ENCODE measurements at regions of chr1 and their contacts with region 1.

Region 1: GRCh38 chr1:200971955-200972711 is 51.4 kb downstream of the KIF21B start:
- DNase-seq: peak; percentile 7 to 40 (median 36)
- H3K4me3 ChIP-seq: no peak overlapping the region
- H3K4me3 Mint-ChIP-seq: no peak overlapping the region
- H3K27ac ChIP-seq: no peak overlapping the region
- H3K27ac Mint-ChIP-seq: no peak overlapping the region
- H3K4me1 ChIP-seq: no peaks in the 10 kb centered on the region
- H3K4me1 Mint-ChIP-seq: no peaks in the 10 kb centered on the region
- H3K27me3 ChIP-seq: no peaks in the 10 kb centered on the region
- H3K27me3 Mint-ChIP-seq: peaks cover 0 to 9% (median 2%) of the 10 kb centered on the region in 3 donors
- CTCF ChIP-seq: peak; percentile 99

Region 2: DNA sequence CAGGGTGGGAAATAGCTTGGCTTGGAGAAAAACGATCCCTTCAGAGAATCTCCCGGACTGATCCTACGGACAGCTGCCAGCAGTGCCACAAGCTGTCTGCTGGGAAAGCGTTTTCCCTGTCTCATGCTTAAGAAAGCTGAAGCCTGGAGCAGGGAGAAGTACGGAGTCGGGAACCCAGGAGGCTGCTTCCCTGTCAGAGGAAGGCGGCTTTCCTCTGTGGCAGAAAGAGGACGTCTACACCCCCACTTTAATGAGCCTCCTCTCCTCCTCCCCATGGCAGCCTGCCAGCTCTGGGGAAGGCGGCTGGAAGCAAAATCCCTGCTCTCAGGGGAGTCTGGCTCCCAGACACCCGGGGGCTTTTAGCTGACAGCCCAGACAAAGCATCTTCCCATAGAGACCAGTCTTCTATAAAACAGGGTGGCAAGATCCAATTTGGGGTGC is 44.1 kb after region 1 on chr1:
- intact Hi-C with region 1: no loop called
- DNase-seq: peak in 1 of 3 donors; percentile 16
- H3K4me3 ChIP-seq: peak overlapping the region in 1 of 3 experiments; percentile 19
- H3K4me3 Mint-ChIP-seq: peak overlapping the region in 1 of 2 donors; percentile 75
- H3K27ac ChIP-seq: no peak overlapping the region
- H3K27ac Mint-ChIP-seq: peak overlapping the region in 2 of 7 donors; percentile 11 to 15
- H3K4me1 ChIP-seq: peaks cover 91% of the 10 kb centered on the region in 2 donors
- H3K4me1 Mint-ChIP-seq: peaks cover 88% of the 10 kb centered on the region
- H3K27me3 ChIP-seq: no peaks in the 10 kb centered on the region
- H3K27me3 Mint-ChIP-seq: peaks cover 3 to 15% (median 3%) of the 10 kb centered on the region in 3 donors
- CTCF ChIP-seq: no peak

Region 3: DNA sequence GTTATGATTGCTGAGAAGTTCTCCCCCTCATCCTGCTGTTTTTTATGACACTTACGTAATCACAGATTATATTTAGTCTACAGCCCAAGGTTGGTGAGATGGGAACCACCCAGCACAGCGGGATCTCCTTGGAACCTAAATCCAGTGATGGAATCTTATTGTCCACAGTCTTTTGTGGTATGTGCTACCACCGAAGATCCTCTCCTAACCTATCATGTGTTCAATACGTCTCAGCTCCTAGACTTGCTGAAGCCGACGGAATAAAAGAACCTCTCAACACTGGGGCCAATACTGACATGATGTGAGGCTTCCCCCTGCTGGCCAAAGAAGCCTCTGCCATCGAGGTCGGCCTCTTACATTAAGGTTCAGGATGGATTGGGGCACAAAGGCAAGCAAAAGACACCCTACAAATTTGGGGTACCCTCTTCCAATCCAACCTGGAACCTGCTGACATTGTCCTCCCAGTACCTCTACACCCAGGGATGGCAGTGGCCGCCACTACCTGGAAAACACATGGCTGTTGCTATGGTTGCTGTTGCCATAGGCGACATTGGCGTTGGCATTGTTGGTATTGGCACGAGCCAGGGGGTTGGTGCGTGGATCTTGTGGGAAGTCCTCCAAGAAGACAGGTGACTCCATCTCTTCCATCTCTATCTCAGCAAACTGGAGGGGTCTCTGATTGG is 70.8 kb after region 1 on chr1:
- intact Hi-C with region 1: loop called (anchors 1 kb)
- DNase-seq: peak; percentile 53 to 66 (median 64)
- H3K4me3 ChIP-seq: no peak overlapping the region
- H3K4me3 Mint-ChIP-seq: peak overlapping the region in 1 of 2 donors; percentile 15
- H3K27ac ChIP-seq: no peak overlapping the region
- H3K27ac Mint-ChIP-seq: peak overlapping the region in 1 of 7 donors; percentile 31
- H3K4me1 ChIP-seq: peaks cover 0 to 5% of the 10 kb centered on the region in 2 donors
- H3K4me1 Mint-ChIP-seq: peaks cover 5% of the 10 kb centered on the region
- H3K27me3 ChIP-seq: no peaks in the 10 kb centered on the region
- H3K27me3 Mint-ChIP-seq: peaks cover 5 to 17% (median 10%) of the 10 kb centered on the region in 3 donors
- CTCF ChIP-seq: peak; percentile 88

Region 4: GRCh38 chr1:201114236-201115131 is 142.4 kb after region 1 on chr1:
- intact Hi-C with region 1: loop called in 1 of 2 experiments (anchors 10 kb)
- DNase-seq: peak; percentile 56 to 70 (median 61)
- H3K4me3 ChIP-seq: peak overlapping the region; percentile 35 to 79 (median 54)
- H3K4me3 Mint-ChIP-seq: peak overlapping the region; percentile 85 to 94
- H3K27ac ChIP-seq: no peak overlapping the region
- H3K27ac Mint-ChIP-seq: peak overlapping the region in 1 of 7 donors; percentile 48
- H3K4me1 ChIP-seq: peaks cover 6 to 14% of the 10 kb centered on the region in 2 donors
- H3K4me1 Mint-ChIP-seq: peaks cover 10% of the 10 kb centered on the region
- H3K27me3 ChIP-seq: peaks cover 8 to 42% of the 10 kb centered on the region in 2 donors
- H3K27me3 Mint-ChIP-seq: peaks cover 33 to 59% (median 50%) of the 10 kb centered on the region in 3 donors
- CTCF ChIP-seq: peak; percentile 80